ENCODE measurements at regions of chr1 and their contacts with region 1.

Region 1: DNA sequence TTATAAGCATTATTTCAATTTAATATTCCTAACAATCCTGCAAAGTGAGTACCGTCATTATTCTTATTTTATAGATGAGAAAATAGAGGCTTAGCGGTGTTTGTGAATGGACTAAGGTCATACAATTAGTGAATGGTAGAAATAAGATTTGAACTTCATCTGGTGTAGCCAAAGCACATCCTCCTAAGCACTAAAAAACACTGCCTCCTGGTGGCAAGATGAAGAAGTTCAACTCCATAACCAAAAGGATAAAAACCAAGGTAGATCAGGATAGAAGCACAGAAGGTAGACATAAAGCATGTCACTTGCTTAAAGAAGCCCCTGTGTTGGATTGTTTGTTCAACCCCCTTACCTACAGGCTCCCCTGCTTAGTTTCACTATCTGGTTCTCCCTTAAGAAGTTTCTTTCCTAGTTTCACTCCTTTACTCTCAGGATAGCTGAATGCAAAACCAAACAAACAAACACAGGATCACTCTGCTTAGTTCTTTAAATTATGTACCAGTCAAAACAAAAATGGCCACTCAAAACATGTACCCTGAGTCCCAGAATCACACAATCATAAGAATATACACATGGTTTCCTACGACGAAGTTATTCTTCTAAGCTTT is 12.7 kb upstream of the AIM2 start:
- DNase-seq: no peak
- H3K4me3 Mint-ChIP-seq: no peak overlapping the region
- H3K27ac Mint-ChIP-seq: no peak overlapping the region
- H3K4me1 Mint-ChIP-seq: peaks cover 55% of the 10 kb centered on the region
- H3K27me3 Mint-ChIP-seq: no peaks in the 10 kb centered on the region

Region 2: GRCh38 chr1:158793604-158794003 is 295.7 kb before region 1 on chr1:
- CTCF ChIA-PET with region 1: no interaction called
- POLR2A ChIA-PET with region 1: no interaction called
- DNase-seq: peak; percentile 46
- H3K4me3 Mint-ChIP-seq: no peak overlapping the region
- H3K27ac Mint-ChIP-seq: no peak overlapping the region
- H3K4me1 Mint-ChIP-seq: no peaks in the 10 kb centered on the region
- H3K27me3 Mint-ChIP-seq: peaks cover 2% of the 10 kb centered on the region

Region 3: GRCh38 chr1:159132271-159132881 is 43.1 kb after region 1 on chr1:
- CTCF ChIA-PET with region 1: interaction called, 12 read pairs
- POLR2A ChIA-PET with region 1: no interaction called
- DNase-seq: peak; percentile 70
- H3K4me3 Mint-ChIP-seq: no peak overlapping the region
- H3K27ac Mint-ChIP-seq: no peak overlapping the region
- H3K4me1 Mint-ChIP-seq: no peaks in the 10 kb centered on the region
- H3K27me3 Mint-ChIP-seq: peaks cover 5% of the 10 kb centered on the region

Measured in activated CD4-positive, alpha-beta memory T cell treated with anti-CD3 and anti-CD28 coated beads, Interleukin-2, amount 10 ng/mL, durations not matched to agents 7 days and 5 days (primary cell).